ENCODE measurements at regions of chr6 and their contacts with region 1.

Region 1: DNA sequence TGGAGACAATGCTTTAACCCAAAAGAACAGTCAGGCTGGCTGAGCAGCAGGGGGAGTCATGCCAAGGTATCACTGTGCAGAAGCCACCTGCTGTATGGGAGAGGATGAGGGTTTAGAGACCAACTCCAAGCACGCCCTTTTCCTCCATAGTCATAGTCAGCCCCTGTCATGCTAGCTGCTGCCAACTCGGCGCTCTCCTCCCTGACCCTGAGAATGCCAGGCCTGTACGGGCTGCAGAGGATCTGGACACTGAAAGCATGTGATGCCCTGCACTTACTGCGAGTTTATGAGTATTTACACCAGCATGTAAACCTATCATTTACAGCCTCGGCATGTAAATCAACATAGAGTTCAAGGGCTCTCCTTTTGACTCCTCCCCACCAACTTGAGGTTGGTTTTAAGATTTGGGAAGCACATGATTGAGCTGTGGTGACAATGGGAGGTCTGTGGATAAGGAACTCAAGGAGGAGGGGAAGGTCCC is 11.7 kb upstream of the SCUBE3 start:
- H3K4me3 ChIP-seq: no peak overlapping the region
- H3K27ac ChIP-seq: no peak overlapping the region
- H3K4me1 ChIP-seq: 0 out of 2 replicates have a peak, but pooled peaks cover 2% of the 10 kb centered on the region
- CTCF ChIP-seq: peak; percentile 81

Region 2: DNA sequence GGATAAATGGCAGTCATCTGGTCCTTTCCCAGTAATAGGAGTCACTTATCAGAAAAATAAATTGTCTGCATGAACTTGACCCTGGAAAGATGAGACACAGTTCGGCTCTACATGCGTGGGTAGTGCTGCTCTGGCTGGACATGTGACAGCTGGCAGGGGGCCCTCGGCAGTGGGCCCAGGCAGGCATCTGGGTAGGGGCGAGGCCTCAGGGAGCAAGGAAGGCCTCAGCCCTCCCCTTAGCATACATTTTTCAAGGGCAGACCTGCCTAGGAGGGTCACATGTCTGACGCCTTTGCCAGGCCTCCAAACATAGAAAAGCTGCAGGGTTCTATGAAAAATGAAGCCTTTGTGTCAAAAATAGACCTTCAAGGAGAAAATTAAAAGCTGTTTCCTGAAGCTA is 492.7 kb before region 1 on chr6:
- CTCF ChIA-PET with region 1: no interaction called
- POLR2A ChIA-PET with region 1: no interaction called
- H3K4me3 ChIP-seq: no peak overlapping the region
- H3K27ac ChIP-seq: no peak overlapping the region
- H3K4me1 ChIP-seq: peaks cover 6% of the 10 kb centered on the region; the same call in 1 of the 2 replicates
- CTCF ChIP-seq: no peak

Region 3: DNA sequence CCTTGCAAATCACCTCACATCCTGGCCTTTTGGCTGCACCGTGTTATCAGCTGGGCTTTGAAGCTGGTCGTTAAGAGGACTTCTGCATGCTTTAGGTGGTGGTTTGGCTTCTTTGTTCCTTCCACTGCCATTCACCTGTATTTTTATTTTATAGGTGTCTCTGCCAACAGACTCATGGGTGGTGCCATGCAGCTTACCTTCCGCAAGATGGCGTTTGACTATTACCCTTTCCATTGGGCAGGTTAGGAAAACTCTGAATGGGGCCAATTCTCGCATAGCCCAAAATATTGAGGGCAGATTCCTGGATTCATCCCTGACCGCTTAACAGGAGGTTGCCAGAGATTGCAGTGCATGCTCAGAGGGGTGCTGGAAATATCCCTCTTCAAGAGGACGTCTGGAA is 346.6 kb before region 1 on chr6:
- CTCF ChIA-PET with region 1: no interaction called
- POLR2A ChIA-PET with region 1: no interaction called
- H3K4me3 ChIP-seq: no peak overlapping the region
- H3K27ac ChIP-seq: no peak overlapping the region
- H3K4me1 ChIP-seq: no peaks in the 10 kb centered on the region
- CTCF ChIP-seq: no peak

Region 4: GRCh38 chr6:35146453-35146852 is 55.7 kb before region 1 on chr6:
- CTCF ChIA-PET with region 1: interaction called, 209 read pairs
- POLR2A ChIA-PET with region 1: interaction called, 3 read pairs
- H3K4me3 ChIP-seq: no peak overlapping the region
- H3K27ac ChIP-seq: no peak overlapping the region
- H3K4me1 ChIP-seq: peaks cover 2% of the 10 kb centered on the region; the same call in 1 of the 2 replicates
- CTCF ChIP-seq: peak; percentile 79

Region 5: DNA sequence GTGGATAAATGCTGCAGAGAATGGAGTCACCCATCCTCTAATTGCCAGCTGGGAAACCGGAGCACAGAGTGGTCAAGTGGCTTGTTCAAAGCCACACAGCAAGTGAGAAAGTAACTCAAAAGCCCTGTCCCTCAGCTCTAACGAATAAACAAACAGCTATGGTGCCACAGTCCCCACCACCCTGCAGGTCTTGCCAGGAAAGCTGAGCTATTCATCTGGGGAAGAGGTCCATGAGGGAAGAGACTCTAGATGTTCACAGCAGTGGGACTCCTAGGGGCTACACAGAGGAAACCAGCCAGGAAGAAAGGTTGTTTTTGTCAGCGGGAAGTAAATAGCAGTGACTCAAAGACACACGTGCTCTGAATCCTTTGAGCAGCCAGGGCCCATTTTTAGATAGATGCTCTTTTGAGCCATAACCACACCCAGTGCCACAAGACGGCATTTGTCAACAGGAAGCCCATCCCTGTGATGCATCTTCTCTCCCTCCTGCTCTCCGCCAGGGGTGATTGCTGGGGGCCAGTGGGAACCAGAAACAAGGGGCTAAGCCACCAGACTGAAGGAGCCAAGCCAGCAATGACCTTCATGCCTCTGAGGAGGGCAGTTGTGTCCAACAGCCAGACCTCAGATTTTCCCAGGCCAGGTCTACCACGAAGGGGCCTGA is 28.5 kb before region 1 on chr6:
- CTCF ChIA-PET with region 1: interaction called, 18 read pairs
- POLR2A ChIA-PET with region 1: no interaction called
- H3K4me3 ChIP-seq: no peak overlapping the region
- H3K27ac ChIP-seq: no peak overlapping the region
- H3K4me1 ChIP-seq: no peaks in the 10 kb centered on the region
- CTCF ChIP-seq: no peak

Region 6: GRCh38 chr6:35213824-35214756 is 12.0 kb after region 1 on chr6 and contains the start of gene SCUBE3:
- CTCF ChIA-PET with region 1: interaction called, 28 read pairs
- POLR2A ChIA-PET with region 1: no interaction called
- H3K4me3 ChIP-seq: peak within 1 kb of the TSS; percentile 47
- H3K27ac ChIP-seq: no peak within 1 kb of the TSS; the same call in 1 of the 2 replicates
- H3K4me1 ChIP-seq: peaks cover 29% of the 10 kb centered on the region
- CTCF ChIP-seq: no peak

Region 7: DNA sequence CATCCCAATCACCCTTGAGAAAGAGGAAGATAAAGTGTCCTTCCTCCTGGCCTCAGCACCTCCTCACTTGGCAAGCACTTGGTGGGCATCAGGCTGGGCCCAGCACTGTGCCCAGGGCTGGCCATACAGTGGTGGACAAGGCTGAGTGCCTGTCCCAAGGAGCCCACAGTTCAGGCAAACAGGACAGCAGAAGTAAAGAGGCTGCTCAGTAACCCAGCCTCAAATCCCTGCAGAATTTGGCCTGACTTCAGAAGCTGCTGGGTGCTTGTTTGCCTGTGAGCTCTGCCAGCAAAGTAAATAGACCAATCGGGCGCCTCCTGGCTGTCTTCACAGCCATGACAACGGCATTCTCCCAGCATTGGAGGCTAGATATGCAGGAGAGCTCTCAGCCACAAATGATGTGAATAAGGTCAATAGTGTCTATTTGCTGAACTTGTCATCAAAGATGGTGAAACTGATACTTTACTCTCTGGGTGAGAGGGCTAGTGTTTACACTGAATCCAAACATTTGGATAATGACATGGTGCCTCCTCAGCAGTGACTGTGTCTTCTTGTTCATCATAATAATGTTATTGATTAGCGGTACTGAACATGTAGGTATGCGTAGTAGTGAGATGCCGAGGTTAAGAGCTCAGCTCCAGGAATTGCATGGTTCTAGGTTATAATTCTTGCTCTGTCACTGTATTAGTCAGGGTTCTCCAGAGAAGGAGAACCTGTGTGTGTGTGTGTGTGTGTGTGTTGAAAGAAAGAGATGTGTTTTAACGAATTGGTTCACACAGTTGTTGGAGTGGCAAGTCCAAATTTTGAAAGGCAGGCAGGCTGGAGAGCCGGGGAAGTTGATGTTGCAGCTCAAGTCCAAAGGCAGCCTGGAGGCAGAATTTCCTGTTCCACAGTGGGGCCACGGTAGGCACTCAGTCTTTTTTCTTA is 213.2 kb after region 1 on chr6:
- CTCF ChIA-PET with region 1: no interaction called
- POLR2A ChIA-PET with region 1: no interaction called
- H3K4me3 ChIP-seq: no peak overlapping the region
- H3K27ac ChIP-seq: no peak overlapping the region; the same call in 1 of the 2 replicates
- H3K4me1 ChIP-seq: peaks cover 4% of the 10 kb centered on the region
- CTCF ChIP-seq: peak; percentile 53